K562 (cell line): ENCODE measurements at regions of chr14 and their contacts with region 1.

Region 1: DNA sequence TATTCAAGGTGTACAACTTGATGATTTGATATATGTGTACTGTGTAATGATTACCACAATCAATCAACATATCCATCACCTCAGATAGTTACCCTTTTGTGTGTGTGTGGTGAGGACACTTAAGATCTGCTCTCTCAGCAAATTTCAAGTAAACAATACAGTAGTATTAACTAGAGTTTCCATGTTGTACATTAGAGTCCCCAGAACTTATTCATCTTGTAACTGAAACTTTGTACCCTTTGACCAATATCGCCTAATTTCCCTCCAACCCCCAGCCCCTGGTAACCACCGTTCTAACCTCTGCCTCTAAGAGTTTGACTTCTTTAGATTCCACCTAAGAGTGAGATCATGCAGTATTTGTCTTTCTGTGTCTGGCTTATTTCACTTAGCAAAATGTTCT is 12.1 kb downstream of the ADCK1 start:
- DNase-seq: no peak
- ATAC-seq: no peak
- H3K4me3 ChIP-seq: no peak overlapping the region
- H3K27ac ChIP-seq: no peak overlapping the region
- H3K4me1 ChIP-seq: peaks cover 0 to 8% of the 10 kb centered on the region in 2 experiments; a peak in 3 of 5 replicates
- H3K27me3 ChIP-seq: no peaks in the 10 kb centered on the region
- CTCF ChIP-seq: no peak
- EP300 ChIP-seq: no peak
- POLR2A ChIP-seq: no peak
- RAD21 ChIP-seq: no peak

Region 2: GRCh38 chr14:77531108-77531464 is 280.9 kb before region 1 on chr14:
- CTCF ChIA-PET with region 1: no interaction called
- POLR2A ChIA-PET with region 1: no interaction called
- in situ Hi-C with region 1: no loop called
- intact Hi-C with region 1: no loop called
- DNase-seq: no peak
- ATAC-seq: no peak
- H3K4me3 ChIP-seq: no peak overlapping the region
- H3K27ac ChIP-seq: no peak overlapping the region
- H3K4me1 ChIP-seq: no peaks in the 10 kb centered on the region; a peak in 1 of 5 replicates
- H3K27me3 ChIP-seq: no peaks in the 10 kb centered on the region
- CTCF ChIP-seq: no peak
- EP300 ChIP-seq: no peak
- POLR2A ChIP-seq: no peak
- RAD21 ChIP-seq: no peak

Region 3: GRCh38 chr14:77654001-77654441 is 158.0 kb before region 1 on chr14:
- CTCF ChIA-PET with region 1: no interaction called
- POLR2A ChIA-PET with region 1: no interaction called
- in situ Hi-C with region 1: no loop called
- intact Hi-C with region 1: loop called (anchors 10 kb)
- DNase-seq: no peak
- ATAC-seq: no peak; the same call in 2 of the 3 replicates
- H3K4me3 ChIP-seq: no peak overlapping the region
- H3K27ac ChIP-seq: no peak overlapping the region
- H3K4me1 ChIP-seq: peaks cover 0 to 4% of the 10 kb centered on the region in 2 experiments; a peak in 4 of 5 replicates
- H3K27me3 ChIP-seq: no peaks in the 10 kb centered on the region
- CTCF ChIP-seq: no peak
- EP300 ChIP-seq: no peak
- POLR2A ChIP-seq: no peak
- RAD21 ChIP-seq: no peak